ENCODE measurements at regions of chr15 and their contacts with region 1.

Region 1: DNA sequence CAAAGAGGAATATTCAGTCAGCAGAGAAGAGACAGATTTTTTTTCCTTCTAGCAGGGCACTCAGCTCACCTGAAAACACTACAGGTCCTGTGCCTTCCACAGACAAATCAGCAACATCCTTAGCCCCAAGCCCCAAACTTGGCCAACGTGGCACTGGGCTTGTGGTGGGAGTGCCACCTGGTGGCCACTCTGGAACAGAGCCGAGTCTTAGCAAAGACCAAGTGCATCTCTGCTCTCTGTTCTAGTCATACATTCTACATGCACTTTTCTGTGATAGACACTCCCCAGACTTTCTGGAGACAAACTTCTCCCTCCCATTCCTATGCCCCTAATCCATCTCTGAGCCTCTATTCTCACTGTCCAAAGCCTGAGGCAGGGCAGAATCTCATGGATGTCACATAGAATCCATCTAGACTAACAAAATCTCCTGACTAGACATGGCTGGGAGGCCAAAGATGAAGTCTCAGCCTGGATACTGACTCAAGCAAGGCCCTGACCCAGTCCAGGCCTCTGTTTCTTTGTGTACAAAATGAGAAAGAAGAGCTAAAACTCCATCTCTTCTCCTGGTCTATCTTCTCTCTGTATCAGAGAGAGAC is 5.1 kb upstream of the SEMA7A start:
- DNase-seq: peak; percentile 84
- H3K4me3 Mint-ChIP-seq: no peak overlapping the region
- H3K27ac Mint-ChIP-seq: no peak overlapping the region
- H3K4me1 Mint-ChIP-seq: peaks cover 19% of the 10 kb centered on the region
- H3K27me3 Mint-ChIP-seq: no peaks in the 10 kb centered on the region

Region 2: GRCh38 chr15:74407055-74407691 is 31.6 kb before region 1 on chr15:
- CTCF ChIA-PET with region 1: interaction called, 13 read pairs
- POLR2A ChIA-PET with region 1: interaction called, 4 read pairs
- DNase-seq: no peak
- H3K4me3 Mint-ChIP-seq: no peak overlapping the region
- H3K27ac Mint-ChIP-seq: no peak overlapping the region
- H3K4me1 Mint-ChIP-seq: peaks cover 24% of the 10 kb centered on the region
- H3K27me3 Mint-ChIP-seq: no peaks in the 10 kb centered on the region

Region 3: DNA sequence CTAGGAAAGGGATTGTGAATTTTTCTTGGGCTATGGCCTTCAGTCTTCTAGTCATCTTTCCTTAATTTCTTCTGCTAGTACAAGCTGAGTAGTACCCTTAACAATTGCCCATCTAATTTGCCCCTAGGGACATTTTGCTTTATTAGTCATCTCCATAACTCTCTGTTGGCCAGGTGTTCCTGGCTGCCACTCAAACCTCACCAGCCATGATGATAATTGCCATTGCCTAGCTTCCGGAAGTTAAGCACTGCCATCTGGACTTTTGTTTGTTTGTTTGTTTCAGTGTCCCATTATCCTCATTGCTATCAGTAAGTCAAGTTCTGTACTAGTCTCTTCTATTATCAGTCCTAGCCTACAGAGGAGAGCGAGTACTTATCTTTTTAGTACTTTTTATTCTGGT is 58.8 kb after region 1 on chr15:
- CTCF ChIA-PET with region 1: no interaction called
- POLR2A ChIA-PET with region 1: no interaction called
- DNase-seq: no peak
- H3K4me3 Mint-ChIP-seq: no peak overlapping the region
- H3K27ac Mint-ChIP-seq: no peak overlapping the region
- H3K4me1 Mint-ChIP-seq: no peaks in the 10 kb centered on the region
- H3K27me3 Mint-ChIP-seq: no peaks in the 10 kb centered on the region

Measured in activated CD4-positive, alpha-beta memory T cell treated with anti-CD3 and anti-CD28 coated beads, Interleukin-2, amount 10 ng/mL, durations not matched to agents 7 days and 5 days (primary cell).